Naive thymus-derived CD8-positive, alpha-beta T cell (primary cell): ENCODE measurements at regions of chr3 and their contacts with region 1.

Region 1: GRCh38 chr3:129428376-129429079 is at the start of gene EFCAB12:
- DNase-seq: peak; percentile 83 to 95 (median 87)
- ATAC-seq: peak; percentile 96 to 97
- H3K4me3 Mint-ChIP-seq: peak within 1 kb of the TSS; percentile 74 to 93 (median 86)
- H3K27ac Mint-ChIP-seq: peak within 1 kb of the TSS; percentile 69 to 94 (median 83)
- H3K4me1 Mint-ChIP-seq: peaks cover 20 to 39% (median 31%) of the 10 kb centered on the region in 4 donors
- H3K27me3 Mint-ChIP-seq: peaks cover 0 to 3% (median 0%) of the 10 kb centered on the region in 5 donors
- polyA plus RNA-seq, gene EFCAB12: 0.16 to 0.20 TPM in 2 of 3 donors, not detected in the other

Region 2: DNA sequence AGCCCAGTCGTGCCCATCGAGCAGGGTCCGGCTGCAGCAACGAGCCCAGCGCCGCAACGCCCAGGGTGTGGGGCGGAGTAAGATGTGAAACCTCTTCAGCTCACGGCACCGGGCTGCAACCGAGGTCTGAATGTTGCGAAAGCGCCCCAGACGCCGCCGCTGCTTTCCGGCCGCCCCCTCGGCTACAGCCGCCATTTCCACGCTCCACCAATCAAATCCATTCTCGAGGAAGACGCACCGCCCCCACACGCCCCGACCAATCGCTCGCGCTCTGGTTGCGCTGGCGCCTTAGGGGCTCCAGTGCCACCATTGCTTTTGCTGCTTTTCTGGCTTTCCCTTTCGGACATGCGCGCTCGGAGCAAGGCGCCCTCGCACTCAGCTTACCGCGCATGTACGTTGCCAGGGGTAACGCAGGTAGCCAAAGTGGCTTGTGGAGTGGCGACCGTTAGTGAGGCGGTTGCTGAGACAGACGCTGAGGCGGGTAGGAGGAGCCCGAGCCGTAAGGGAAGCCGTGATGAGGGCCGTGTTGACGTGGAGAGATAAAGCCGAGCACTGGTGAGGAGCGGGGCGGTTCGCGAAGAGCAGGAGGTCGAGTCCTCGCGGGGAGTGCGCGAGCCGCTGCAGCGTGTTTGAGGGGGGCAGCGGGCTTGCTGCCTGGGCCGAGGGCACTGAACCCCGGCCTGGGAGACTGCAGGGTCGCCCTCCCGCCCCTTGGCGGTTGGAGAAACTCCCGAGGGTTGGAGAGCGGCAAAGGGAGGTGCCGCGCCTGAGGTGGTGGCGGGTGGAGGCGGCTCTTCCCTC is 11.5 kb after region 1 on chr3 and contains the starts of genes IFT122 and MBD4:
- POLR2A ChIA-PET with region 1: interaction called, 34 read pairs
- DNase-seq: peak; percentile 92 to 99 (median 99)
- ATAC-seq: peak; percentile 87 to 88
- H3K4me3 Mint-ChIP-seq: peak within 1 kb of the TSS; percentile 90 to 99 (median 96)
- H3K27ac Mint-ChIP-seq: peak within 1 kb of the TSS; percentile 95 to 99 (median 98)
- H3K4me1 Mint-ChIP-seq: peaks cover 30 to 84% (median 67%) of the 10 kb centered on the region in 4 donors
- H3K27me3 Mint-ChIP-seq: no peaks in the 10 kb centered on the region
- polyA plus RNA-seq, gene IFT122: 3.3 to 6.5 (median 3.5) TPM
- polyA plus RNA-seq, gene MBD4: 33.6 to 40.0 (median 35.9) TPM

Region 3: GRCh38 chr3:129485721-129486673 is 57.5 kb after region 1 on chr3:
- POLR2A ChIA-PET with region 1: no interaction called
- DNase-seq: no peak
- ATAC-seq: no peak
- H3K4me3 Mint-ChIP-seq: no peak overlapping the region
- H3K27ac Mint-ChIP-seq: peak overlapping the region in 1 of 10 donors; percentile 33
- H3K4me1 Mint-ChIP-seq: peaks cover 7 to 14% (median 11%) of the 10 kb centered on the region in 4 donors
- H3K27me3 Mint-ChIP-seq: no peaks in the 10 kb centered on the region